ENCODE measurements at regions of chr6 and their contacts with region 1.

Region 1: DNA sequence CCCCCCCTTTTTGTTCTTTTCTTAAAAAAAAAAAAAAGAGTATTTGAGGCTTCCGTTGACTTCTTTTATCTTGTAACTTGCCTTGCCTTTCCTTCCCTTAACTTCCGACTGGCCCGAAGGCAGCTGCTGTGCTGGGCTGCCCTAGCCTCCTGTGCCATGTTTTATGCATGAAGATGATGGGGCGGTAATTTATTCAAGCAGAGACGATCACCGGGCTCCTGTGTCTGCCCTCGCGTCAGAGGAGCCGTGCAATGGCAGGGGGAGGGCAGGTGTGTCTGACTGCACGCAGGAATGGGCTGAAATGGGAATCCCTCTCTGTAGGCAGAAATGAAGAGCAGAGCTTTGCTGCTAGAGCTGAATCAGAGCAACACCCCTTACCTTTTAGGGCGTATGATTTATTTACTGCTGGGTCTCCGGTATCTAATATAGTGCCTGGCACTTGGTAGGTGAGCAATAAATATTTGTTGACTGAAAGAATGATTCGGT is 106.3 kb upstream of the RIPOR2 start:
- DNase-seq: peak; percentile 54
- H3K4me3 Mint-ChIP-seq: peak overlapping the region; percentile 92
- H3K27ac Mint-ChIP-seq: peak overlapping the region; percentile 96
- H3K4me1 Mint-ChIP-seq: peaks cover 56% of the 10 kb centered on the region
- H3K27me3 Mint-ChIP-seq: no peaks in the 10 kb centered on the region

Region 2: GRCh38 chr6:25061289-25061936 is 19.3 kb after region 1 on chr6:
- CTCF ChIA-PET with region 1: interaction called, 54 read pairs
- POLR2A ChIA-PET with region 1: interaction called, 22 read pairs
- DNase-seq: no peak
- H3K4me3 Mint-ChIP-seq: no peak overlapping the region
- H3K27ac Mint-ChIP-seq: no peak overlapping the region
- H3K4me1 Mint-ChIP-seq: peaks cover 24% of the 10 kb centered on the region
- H3K27me3 Mint-ChIP-seq: no peaks in the 10 kb centered on the region

Region 3: GRCh38 chr6:25122001-25122400 is 79.9 kb after region 1 on chr6:
- CTCF ChIA-PET with region 1: no interaction called
- POLR2A ChIA-PET with region 1: no interaction called
- DNase-seq: no peak
- H3K4me3 Mint-ChIP-seq: no peak overlapping the region
- H3K27ac Mint-ChIP-seq: peak overlapping the region; percentile 12
- H3K4me1 Mint-ChIP-seq: peaks cover 73% of the 10 kb centered on the region
- H3K27me3 Mint-ChIP-seq: no peaks in the 10 kb centered on the region